ENCODE measurements at regions of chr13 and their contacts with region 1.

Region 1: GRCh38 chr13:91017031-91017668 is 330.3 kb upstream of the MIR17HG start:
- DNase-seq: peak; percentile 90 to 98 (median 94)
- ATAC-seq: peak; percentile 99
- H3K4me3 ChIP-seq: no peak overlapping the region
- H3K27ac ChIP-seq: no peak overlapping the region
- H3K4me1 ChIP-seq: no peaks in the 10 kb centered on the region
- H3K27me3 ChIP-seq: no peaks in the 10 kb centered on the region
- CTCF ChIP-seq: peak in 1 of 3 experiments; percentile 99; a peak in 2 of 6 replicates
- EP300 ChIP-seq: no peak
- POLR2A ChIP-seq: no peak
- RAD21 ChIP-seq: peak in 1 of 2 experiments; percentile 99; a peak in 2 of 4 replicates

Region 2: DNA sequence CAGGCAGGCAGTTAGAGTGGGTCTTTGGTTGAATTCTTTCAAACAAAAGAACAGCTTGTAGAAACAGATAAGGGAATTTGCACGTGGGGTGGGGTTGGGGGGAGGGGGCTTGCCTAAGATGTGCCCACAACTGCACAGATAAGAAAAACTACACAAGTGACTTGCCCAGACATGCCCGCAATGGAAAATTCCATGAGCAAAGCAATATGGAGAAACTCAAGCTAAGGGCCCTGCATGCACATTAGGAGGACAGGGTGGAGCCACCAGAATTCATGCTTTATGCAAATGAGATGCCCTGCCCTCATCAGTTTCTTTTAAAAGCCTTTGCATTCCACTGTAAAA is 425.3 kb before region 1 on chr13:
- CTCF ChIA-PET with region 1: no interaction called
- POLR2A ChIA-PET with region 1: no interaction called
- in situ Hi-C with region 1: no loop called
- intact Hi-C with region 1: no loop called
- DNase-seq: peak in 1 of 4 experiments; percentile 23
- ATAC-seq: peak; percentile 50
- H3K4me3 ChIP-seq: no peak overlapping the region
- H3K27ac ChIP-seq: no peak overlapping the region
- H3K4me1 ChIP-seq: no peaks in the 10 kb centered on the region
- H3K27me3 ChIP-seq: no peaks in the 10 kb centered on the region
- CTCF ChIP-seq: no peak
- EP300 ChIP-seq: no peak
- POLR2A ChIP-seq: no peak
- RAD21 ChIP-seq: no peak

Region 3: GRCh38 chr13:90867336-90867683 is 149.8 kb before region 1 on chr13:
- CTCF ChIA-PET with region 1: interaction called, 4 read pairs
- POLR2A ChIA-PET with region 1: no interaction called
- in situ Hi-C with region 1: no loop called
- intact Hi-C with region 1: loop called (anchors 5 kb)
- DNase-seq: peak; percentile 58 to 82 (median 62)
- ATAC-seq: peak; percentile 95
- H3K4me3 ChIP-seq: no peak overlapping the region
- H3K27ac ChIP-seq: no peak overlapping the region
- H3K4me1 ChIP-seq: no peaks in the 10 kb centered on the region
- H3K27me3 ChIP-seq: no peaks in the 10 kb centered on the region
- CTCF ChIP-seq: peak in 1 of 3 experiments; percentile 91; a peak in 2 of 6 replicates
- EP300 ChIP-seq: no peak
- POLR2A ChIP-seq: no peak
- RAD21 ChIP-seq: peak in 1 of 2 experiments; percentile 88; a peak in 2 of 4 replicates

Region 4: GRCh38 chr13:92677571-92677970 is 1660.4 kb after region 1 on chr13:
- CTCF ChIA-PET with region 1: no interaction called
- POLR2A ChIA-PET with region 1: no interaction called
- in situ Hi-C with region 1: loop called (anchors 25 kb)
- intact Hi-C with region 1: no loop called
- DNase-seq: no peak
- ATAC-seq: no peak
- H3K4me3 ChIP-seq: no peak overlapping the region
- H3K27ac ChIP-seq: no peak overlapping the region
- H3K4me1 ChIP-seq: no peaks in the 10 kb centered on the region
- H3K27me3 ChIP-seq: no peaks in the 10 kb centered on the region
- CTCF ChIP-seq: no peak
- EP300 ChIP-seq: no peak
- POLR2A ChIP-seq: no peak
- RAD21 ChIP-seq: no peak

Region 5: GRCh38 chr13:92694047-92694446 is 1676.9 kb after region 1 on chr13:
- CTCF ChIA-PET with region 1: no interaction called
- POLR2A ChIA-PET with region 1: no interaction called
- in situ Hi-C with region 1: loop called (anchors 25 kb)
- intact Hi-C with region 1: loop called (anchors 5 kb)
- DNase-seq: no peak
- ATAC-seq: peak; percentile 25; the same call in 2 of the 3 replicates
- H3K4me3 ChIP-seq: no peak overlapping the region
- H3K27ac ChIP-seq: no peak overlapping the region
- H3K4me1 ChIP-seq: no peaks in the 10 kb centered on the region
- H3K27me3 ChIP-seq: no peaks in the 10 kb centered on the region
- CTCF ChIP-seq: no peak
- EP300 ChIP-seq: no peak
- POLR2A ChIP-seq: no peak
- RAD21 ChIP-seq: no peak

Measured in K562 (cell line).